ENCODE measurements at regions of chr13 and their contacts with region 1.

Region 1: GRCh38 chr13:45278096-45278645 is 62.8 kb downstream of the TPT1 start:
- DNase-seq: no peak
- ATAC-seq: no peak
- H3K4me3 ChIP-seq: no peak overlapping the region
- H3K27ac ChIP-seq: no peak overlapping the region
- H3K4me1 ChIP-seq: no peaks in the 10 kb centered on the region
- H3K27me3 ChIP-seq: no peaks in the 10 kb centered on the region
- CTCF ChIP-seq: no peak
- POLR2A ChIP-seq: no peak

Region 2: GRCh38 chr13:45047394-45048310 is 230.5 kb before region 1 on chr13:
- intact Hi-C with region 1: loop called (anchors 10 kb)
- DNase-seq: peak; percentile 79 to 83 (median 81)
- ATAC-seq: peak; percentile 93
- H3K4me3 ChIP-seq: no peak overlapping the region
- H3K27ac ChIP-seq: no peak overlapping the region
- H3K4me1 ChIP-seq: peaks cover 7% of the 10 kb centered on the region
- H3K27me3 ChIP-seq: no peaks in the 10 kb centered on the region
- CTCF ChIP-seq: peak; percentile 79 to 95 (median 93)
- POLR2A ChIP-seq: no peak